OCI-LY7 (cell line): ENCODE measurements at regions of chr4 and their contacts with region 1.

Region 1: DNA sequence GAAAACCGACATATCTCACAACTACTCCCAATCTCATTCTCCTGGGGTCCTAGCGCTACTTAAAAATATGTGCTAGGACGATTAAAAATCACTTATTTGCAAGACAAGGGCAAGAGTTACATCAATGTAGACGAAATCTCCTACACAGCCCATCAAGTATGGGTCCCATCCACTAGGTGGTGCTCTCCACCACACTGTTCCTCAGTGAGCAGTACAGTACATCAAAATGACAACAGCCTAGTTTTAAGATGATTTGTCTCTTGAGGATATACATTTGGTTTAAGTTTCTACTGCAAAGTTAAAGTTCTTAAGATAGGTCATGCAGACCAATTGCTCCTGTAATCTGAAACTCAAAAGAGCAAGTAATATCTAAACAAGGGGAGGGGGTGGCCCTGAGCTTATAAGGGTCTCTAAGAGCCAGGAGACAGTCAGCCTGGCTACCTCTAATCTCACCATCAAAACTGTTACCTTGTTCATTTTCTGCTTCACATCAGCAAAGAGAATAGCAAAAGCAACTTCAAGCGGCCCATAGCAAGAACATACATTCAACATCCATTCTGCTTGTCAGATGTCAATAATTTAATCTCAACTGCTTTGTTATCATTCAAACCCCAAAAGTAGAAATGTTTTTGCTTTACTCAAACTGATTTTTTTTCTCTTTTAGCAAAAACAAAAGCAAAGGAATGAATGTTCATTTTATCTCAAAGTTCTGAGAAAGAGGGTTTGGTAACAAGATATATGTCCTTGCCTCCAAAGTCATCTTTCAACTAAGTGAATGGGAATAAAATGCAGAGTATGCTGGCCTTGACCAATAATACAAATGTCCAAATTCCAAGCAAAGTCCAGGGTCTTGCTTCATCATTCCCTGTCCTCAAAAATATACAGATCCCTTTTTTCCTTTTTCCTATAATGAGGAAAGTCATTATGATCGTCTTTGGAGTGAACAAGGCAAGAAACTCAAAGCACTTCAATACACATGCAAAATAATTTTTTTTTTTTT is 53.1 kb downstream of the STX18 start:
- DNase-seq: peak; percentile 85
- H3K4me3 ChIP-seq: no peak overlapping the region
- H3K27ac ChIP-seq: no peak overlapping the region
- H3K4me1 ChIP-seq: peaks cover 43% of the 10 kb centered on the region
- CTCF ChIP-seq: peak; percentile 99

Region 2: GRCh38 chr4:4659871-4660651 is 171.4 kb after region 1 on chr4:
- CTCF ChIA-PET with region 1: no interaction called
- POLR2A ChIA-PET with region 1: no interaction called
- intact Hi-C with region 1: loop called (anchors 10 kb)
- DNase-seq: no peak
- H3K4me3 ChIP-seq: no peak overlapping the region
- H3K27ac ChIP-seq: no peak overlapping the region
- H3K4me1 ChIP-seq: no peaks in the 10 kb centered on the region
- CTCF ChIP-seq: no peak

Region 3: GRCh38 chr4:4852591-4853375 is 364.1 kb after region 1 on chr4:
- CTCF ChIA-PET with region 1: no interaction called
- POLR2A ChIA-PET with region 1: no interaction called
- intact Hi-C with region 1: loop called (anchors 5 kb)
- DNase-seq: no peak
- H3K4me3 ChIP-seq: no peak overlapping the region
- H3K27ac ChIP-seq: no peak overlapping the region
- H3K4me1 ChIP-seq: no peaks in the 10 kb centered on the region
- CTCF ChIP-seq: no peak

Region 4: DNA sequence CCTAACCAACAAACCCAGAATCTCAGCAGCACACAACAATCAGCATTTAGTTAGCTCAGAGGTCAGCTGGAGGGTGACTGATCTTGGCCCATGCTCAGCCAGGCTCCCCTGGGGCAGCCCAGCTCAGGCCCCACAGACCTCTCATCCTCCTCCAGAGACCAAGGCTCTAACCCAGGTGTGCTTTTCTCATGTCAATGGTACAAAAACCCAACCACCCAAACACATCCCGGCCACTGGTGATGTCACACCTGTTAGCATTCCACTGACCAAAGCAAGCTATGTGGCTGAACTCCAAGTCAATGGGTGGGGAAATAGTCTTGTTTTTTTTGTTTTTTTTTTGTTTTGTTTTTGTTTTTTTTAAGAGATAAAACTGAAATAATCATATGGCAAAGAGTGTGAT is 453.0 kb after region 1 on chr4:
- CTCF ChIA-PET with region 1: no interaction called
- POLR2A ChIA-PET with region 1: no interaction called
- intact Hi-C with region 1: loop called (anchors 2 kb)
- DNase-seq: peak; percentile 57
- H3K4me3 ChIP-seq: no peak overlapping the region
- H3K27ac ChIP-seq: peak overlapping the region; percentile 11
- H3K4me1 ChIP-seq: peaks cover 38% of the 10 kb centered on the region
- CTCF ChIP-seq: no peak